PC-9 (cell line): ENCODE measurements at regions of chr11 and their contacts with region 1.

Region 1: DNA sequence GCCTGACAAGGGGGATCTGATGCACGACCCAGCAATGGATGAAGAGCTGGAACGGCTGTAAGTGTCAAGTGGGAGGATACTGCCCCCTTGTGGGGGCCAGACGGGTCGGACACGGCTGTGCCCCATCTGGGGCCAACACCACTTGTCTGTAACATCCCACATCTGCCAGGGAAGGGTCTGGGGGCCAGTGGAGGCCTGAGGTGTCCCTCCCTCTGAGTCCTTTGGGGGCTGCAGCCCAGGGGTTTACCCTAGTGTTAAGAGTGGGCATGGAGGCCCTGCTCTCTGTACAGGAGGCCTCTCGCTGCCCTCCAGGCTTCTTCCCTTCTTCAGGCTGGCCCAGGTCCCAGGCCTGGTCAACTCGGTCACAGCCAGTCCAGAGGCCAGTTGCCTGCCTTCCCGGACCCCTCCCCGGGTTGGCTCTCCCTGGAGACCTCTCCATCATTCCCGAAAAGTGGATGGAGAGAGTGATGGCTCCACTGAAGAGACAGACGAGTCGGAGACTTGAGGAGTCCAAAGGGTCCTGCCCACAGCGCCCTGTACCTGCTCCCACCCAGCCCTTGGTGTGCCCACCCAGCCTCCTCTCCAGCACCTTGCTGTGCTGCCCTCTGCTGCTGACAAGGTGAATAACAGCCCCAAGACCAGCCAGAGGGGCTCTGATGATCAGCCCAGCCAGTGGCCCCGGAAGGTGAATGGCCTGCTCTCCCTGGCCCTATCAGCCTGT is 15.4 kb downstream of the ARFGAP2 start:
- DNase-seq: peak; percentile 51 to 64
- H3K4me3 ChIP-seq: no peak overlapping the region
- H3K27ac ChIP-seq: no peak overlapping the region
- H3K4me1 ChIP-seq: no peaks in the 10 kb centered on the region
- H3K27me3 ChIP-seq: no peaks in the 10 kb centered on the region
- CTCF ChIP-seq: peak; percentile 75

Region 2: GRCh38 chr11:46987183-46987582 is 174.1 kb before region 1 on chr11:
- CTCF ChIA-PET with region 1: no interaction called
- POLR2A ChIA-PET with region 1: no interaction called
- intact Hi-C with region 1: no loop called
- DNase-seq: no peak
- H3K4me3 ChIP-seq: no peak overlapping the region
- H3K27ac ChIP-seq: no peak overlapping the region
- H3K4me1 ChIP-seq: peaks cover 13% of the 10 kb centered on the region
- H3K27me3 ChIP-seq: no peaks in the 10 kb centered on the region
- CTCF ChIP-seq: no peak

Region 3: GRCh38 chr11:47083913-47084312 is 77.4 kb before region 1 on chr11:
- CTCF ChIA-PET with region 1: no interaction called
- POLR2A ChIA-PET with region 1: no interaction called
- intact Hi-C with region 1: no loop called
- DNase-seq: peak in 1 of 2 experiments; percentile 41
- H3K4me3 ChIP-seq: no peak overlapping the region
- H3K27ac ChIP-seq: no peak overlapping the region
- H3K4me1 ChIP-seq: no peaks in the 10 kb centered on the region
- H3K27me3 ChIP-seq: no peaks in the 10 kb centered on the region
- CTCF ChIP-seq: no peak

Region 4: DNA sequence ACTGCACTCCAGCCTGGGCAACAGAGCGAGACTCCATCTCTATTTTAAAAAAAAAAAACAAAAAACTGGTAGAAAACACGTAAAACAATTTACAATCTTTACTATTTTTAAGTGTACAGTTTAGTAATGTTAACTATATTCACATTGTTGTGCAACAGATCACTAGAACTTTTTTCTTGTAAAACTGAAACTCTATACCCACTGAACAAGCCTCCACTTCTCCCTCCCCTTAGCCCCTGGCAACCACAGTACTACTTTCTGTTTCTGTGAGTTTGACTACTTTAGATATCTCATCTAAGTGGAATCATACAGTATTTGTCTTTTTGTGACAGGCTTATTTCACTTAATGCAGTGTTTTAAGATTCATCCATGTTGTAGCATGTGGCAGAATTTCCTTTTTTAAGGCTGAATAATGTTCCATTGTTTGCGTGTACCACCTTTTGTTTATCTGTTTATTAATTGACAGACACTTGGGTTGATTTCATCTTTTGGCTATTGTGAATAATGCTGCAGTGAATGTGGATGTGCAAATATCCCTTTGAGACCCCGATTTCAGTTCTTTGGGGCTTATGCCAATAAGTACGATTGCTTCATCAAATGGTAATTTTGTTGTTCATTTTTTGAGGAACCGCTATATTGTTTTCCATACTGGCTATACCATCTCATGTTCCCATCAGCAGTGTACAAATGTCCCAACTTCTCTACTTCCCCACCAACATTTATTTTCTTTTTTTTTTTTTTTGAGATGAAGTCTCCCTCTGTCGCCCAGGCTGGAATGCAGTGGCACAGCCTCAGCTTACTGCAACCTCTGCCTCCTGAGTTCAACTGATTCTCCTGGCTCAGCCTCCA is 64.5 kb after region 1 on chr11:
- CTCF ChIA-PET with region 1: interaction called, 15 read pairs
- POLR2A ChIA-PET with region 1: no interaction called
- intact Hi-C with region 1: no loop called
- DNase-seq: no peak
- H3K4me3 ChIP-seq: no peak overlapping the region
- H3K27ac ChIP-seq: no peak overlapping the region
- H3K4me1 ChIP-seq: peaks cover 4% of the 10 kb centered on the region
- H3K27me3 ChIP-seq: no peaks in the 10 kb centered on the region
- CTCF ChIP-seq: no peak

Region 5: DNA sequence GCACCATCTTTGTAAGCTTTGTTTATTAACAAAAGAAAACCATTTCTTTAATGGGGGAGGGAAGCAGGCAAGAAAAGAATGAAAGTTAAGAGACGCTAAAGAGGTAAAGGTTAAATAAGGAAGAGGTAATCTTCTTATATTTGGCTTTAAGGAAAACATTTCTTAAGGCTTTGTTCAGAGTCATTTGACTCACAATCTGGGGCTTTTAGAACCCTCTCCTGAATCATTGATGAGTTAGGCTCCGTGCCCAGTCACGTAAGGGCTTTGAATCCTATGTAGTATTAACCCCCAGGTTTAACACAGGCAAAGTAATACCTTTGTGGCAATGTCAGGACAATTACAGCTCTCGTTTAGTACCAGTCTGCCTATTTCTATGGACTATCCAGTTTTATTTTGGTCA is 134.8 kb after region 1 on chr11:
- CTCF ChIA-PET with region 1: no interaction called
- POLR2A ChIA-PET with region 1: no interaction called
- intact Hi-C with region 1: no loop called
- DNase-seq: no peak
- H3K4me3 ChIP-seq: no peak overlapping the region
- H3K27ac ChIP-seq: no peak overlapping the region
- H3K4me1 ChIP-seq: no peaks in the 10 kb centered on the region
- H3K27me3 ChIP-seq: no peaks in the 10 kb centered on the region
- CTCF ChIP-seq: no peak